H1 (cell line): ENCODE measurements at regions of chr19 and their contacts with region 1.

Region 1: GRCh38 chr19:35822579-35822978 is 9.9 kb upstream of the PRODH2 start:
- DNase-seq: no peak
- H3K4me3 ChIP-seq: no peak overlapping the region
- H3K27ac ChIP-seq: no peak overlapping the region
- H3K4me1 ChIP-seq: no peaks in the 10 kb centered on the region
- H3K27me3 ChIP-seq: peaks cover 0 to 3% (median 0%) of the 10 kb centered on the region in 4 experiments; a peak in 3 of 7 replicates
- CTCF ChIP-seq: no peak
- EP300 ChIP-seq: no peak
- POLR2A ChIP-seq: no peak
- RAD21 ChIP-seq: no peak

Region 2: GRCh38 chr19:35833972-35834371 is 11.4 kb after region 1 on chr19:
- CTCF ChIA-PET with region 1: interaction called, 13 read pairs
- POLR2A ChIA-PET with region 1: no interaction called
- DNase-seq: no peak
- H3K4me3 ChIP-seq: no peak overlapping the region
- H3K27ac ChIP-seq: no peak overlapping the region
- H3K4me1 ChIP-seq: no peaks in the 10 kb centered on the region
- H3K27me3 ChIP-seq: no peaks in the 10 kb centered on the region; a peak in 1 of 7 replicates
- CTCF ChIP-seq: no peak
- EP300 ChIP-seq: no peak
- POLR2A ChIP-seq: no peak
- RAD21 ChIP-seq: no peak

Region 3: GRCh38 chr19:35869327-35870123 is 46.9 kb after region 1 on chr19:
- CTCF ChIA-PET with region 1: no interaction called
- POLR2A ChIA-PET with region 1: no interaction called
- DNase-seq: peak; percentile 82 to 94
- H3K4me3 ChIP-seq: peak overlapping the region; percentile 38 to 64 (median 52); a peak in 7 of 8 replicates
- H3K27ac ChIP-seq: no peak overlapping the region
- H3K4me1 ChIP-seq: peaks cover 0 to 12% (median 8%) of the 10 kb centered on the region in 4 experiments; a peak in 5 of 7 replicates
- H3K27me3 ChIP-seq: peaks cover 3 to 12% (median 9%) of the 10 kb centered on the region in 4 experiments
- CTCF ChIP-seq: 0 out of 4 replicates have a peak, but pooled peaks of 1 of the 3 experiments have one; percentile 4
- EP300 ChIP-seq: no peak
- POLR2A ChIP-seq: no peak
- RAD21 ChIP-seq: no peak